ENCODE measurements at regions of chr5 and their contacts with region 1.

Region 1: DNA sequence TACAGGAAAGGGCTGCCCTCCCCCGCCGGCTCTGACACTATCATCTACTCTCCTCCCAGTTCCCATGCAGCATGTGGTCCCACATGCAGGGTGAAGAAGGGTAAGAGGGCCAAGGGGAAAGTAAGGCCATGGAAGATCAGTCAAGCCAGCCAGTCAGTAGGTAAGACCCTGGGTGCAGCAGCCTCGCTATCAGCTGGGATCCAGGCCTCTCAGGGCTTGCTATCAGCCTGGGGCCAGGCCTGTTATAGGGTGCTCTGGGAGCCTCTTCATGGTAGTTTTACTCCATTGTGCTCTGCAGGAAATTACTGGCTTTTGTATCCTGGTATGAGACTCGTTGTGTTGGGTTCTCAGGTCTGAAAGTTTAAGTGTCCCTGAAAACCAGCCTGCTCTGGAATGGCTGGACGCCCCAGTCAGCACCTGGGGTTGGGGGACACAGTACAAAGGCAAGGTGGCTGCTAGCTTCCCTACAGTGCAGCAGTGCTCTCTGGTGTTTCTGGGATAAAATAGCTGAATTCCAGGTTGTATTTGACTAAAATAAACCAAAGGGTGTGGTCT is 21.4 kb downstream of the SLC22A4 start:
- DNase-seq: peak; percentile 93 to 96 (median 95)
- ATAC-seq: peak; percentile 82
- H3K4me3 ChIP-seq: no peak overlapping the region
- H3K27ac ChIP-seq: peak overlapping the region; percentile 75
- H3K4me1 ChIP-seq: peaks cover 70 to 73% of the 10 kb centered on the region in 2 experiments
- H3K27me3 ChIP-seq: no peaks in the 10 kb centered on the region
- CTCF ChIP-seq: peak; percentile 54 to 79 (median 69)
- EP300 ChIP-seq: peak; percentile 93
- POLR2A ChIP-seq: no peak
- RAD21 ChIP-seq: peak; percentile 68 to 91

Region 2: GRCh38 chr5:132055808-132056609 is 259.6 kb before region 1 on chr5:
- CTCF ChIA-PET with region 1: no interaction called
- POLR2A ChIA-PET with region 1: no interaction called
- in situ Hi-C with region 1: no loop called
- intact Hi-C with region 1: no loop called
- DNase-seq: no peak
- ATAC-seq: peak; percentile 58
- H3K4me3 ChIP-seq: no peak overlapping the region
- H3K27ac ChIP-seq: no peak overlapping the region
- H3K4me1 ChIP-seq: peaks cover 0 to 17% of the 10 kb centered on the region in 2 experiments; a peak in 2 of 5 replicates
- H3K27me3 ChIP-seq: peaks cover 11 to 30% of the 10 kb centered on the region in 2 experiments; a peak in 4 of 5 replicates
- CTCF ChIP-seq: no peak
- EP300 ChIP-seq: no peak
- POLR2A ChIP-seq: no peak
- RAD21 ChIP-seq: no peak

Region 3: GRCh38 chr5:132238169-132238744 is 77.3 kb before region 1 on chr5:
- CTCF ChIA-PET with region 1: interaction called, 11 read pairs
- POLR2A ChIA-PET with region 1: no interaction called
- in situ Hi-C with region 1: no loop called
- intact Hi-C with region 1: loop called (anchors 1 kb)
- DNase-seq: peak; percentile 64 to 86 (median 77)
- ATAC-seq: peak; percentile 94
- H3K4me3 ChIP-seq: no peak overlapping the region
- H3K27ac ChIP-seq: no peak overlapping the region
- H3K4me1 ChIP-seq: no peaks in the 10 kb centered on the region; a peak in 2 of 5 replicates
- H3K27me3 ChIP-seq: no peaks in the 10 kb centered on the region
- CTCF ChIP-seq: peak; percentile 80 to 87 (median 81)
- EP300 ChIP-seq: no peak
- POLR2A ChIP-seq: no peak
- RAD21 ChIP-seq: peak; percentile 41 to 86

Region 4: DNA sequence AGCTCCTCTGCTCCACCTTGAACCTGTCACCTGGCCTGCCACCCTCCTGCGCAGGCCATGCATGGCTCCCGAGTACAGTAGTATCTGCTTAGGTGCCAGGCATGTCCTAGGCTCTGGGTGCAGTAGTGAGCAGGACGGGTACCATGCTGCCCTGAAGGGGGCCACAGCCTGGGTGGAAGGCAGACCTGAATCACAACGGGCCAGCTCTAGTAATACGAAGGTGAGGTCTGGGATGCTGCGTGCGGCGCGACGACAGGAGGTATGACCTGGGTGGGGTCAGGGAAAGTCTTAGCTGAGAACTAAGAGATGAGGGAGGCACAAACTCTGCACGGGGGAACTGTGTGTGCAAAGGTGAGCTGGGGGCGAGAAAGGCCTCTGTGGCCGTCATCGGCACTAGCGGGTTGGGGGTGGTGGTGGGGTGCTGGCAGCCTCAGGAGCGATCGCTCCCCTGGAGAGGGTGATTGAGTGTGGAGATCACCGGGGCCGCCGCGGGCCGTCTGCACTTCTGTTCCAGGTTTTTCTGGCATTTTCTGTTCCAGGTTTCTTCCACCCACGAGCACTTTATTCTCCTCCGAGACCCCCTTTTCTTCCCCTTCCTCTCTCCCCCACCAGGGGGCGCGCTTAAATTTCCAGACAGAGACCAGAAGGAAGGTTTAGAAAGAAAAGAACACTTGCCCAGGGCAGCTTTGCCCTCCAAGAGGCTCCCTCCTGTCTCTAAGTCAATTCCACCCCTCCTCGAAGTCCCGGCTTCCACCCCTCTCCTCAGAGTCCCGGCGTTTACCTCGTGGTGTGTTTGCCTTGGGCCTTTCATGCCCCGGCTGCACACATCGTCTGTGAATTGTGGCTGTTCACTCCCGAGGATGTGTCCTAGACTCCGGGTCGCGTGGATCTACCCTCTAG is 43.0 kb before region 1 on chr5:
- CTCF ChIA-PET with region 1: interaction called, 11 read pairs
- POLR2A ChIA-PET with region 1: no interaction called
- in situ Hi-C with region 1: no loop called
- intact Hi-C with region 1: loop called (anchors 1 kb)
- DNase-seq: peak; percentile 59 to 85 (median 65)
- ATAC-seq: peak; percentile 82
- H3K4me3 ChIP-seq: no peak overlapping the region
- H3K27ac ChIP-seq: no peak overlapping the region
- H3K4me1 ChIP-seq: peaks cover 12 to 41% of the 10 kb centered on the region in 2 experiments; a peak in 4 of 5 replicates
- H3K27me3 ChIP-seq: no peaks in the 10 kb centered on the region
- CTCF ChIP-seq: peak; percentile 82 to 89 (median 84)
- EP300 ChIP-seq: no peak
- POLR2A ChIP-seq: no peak
- RAD21 ChIP-seq: peak; percentile 62 to 89

Region 5: DNA sequence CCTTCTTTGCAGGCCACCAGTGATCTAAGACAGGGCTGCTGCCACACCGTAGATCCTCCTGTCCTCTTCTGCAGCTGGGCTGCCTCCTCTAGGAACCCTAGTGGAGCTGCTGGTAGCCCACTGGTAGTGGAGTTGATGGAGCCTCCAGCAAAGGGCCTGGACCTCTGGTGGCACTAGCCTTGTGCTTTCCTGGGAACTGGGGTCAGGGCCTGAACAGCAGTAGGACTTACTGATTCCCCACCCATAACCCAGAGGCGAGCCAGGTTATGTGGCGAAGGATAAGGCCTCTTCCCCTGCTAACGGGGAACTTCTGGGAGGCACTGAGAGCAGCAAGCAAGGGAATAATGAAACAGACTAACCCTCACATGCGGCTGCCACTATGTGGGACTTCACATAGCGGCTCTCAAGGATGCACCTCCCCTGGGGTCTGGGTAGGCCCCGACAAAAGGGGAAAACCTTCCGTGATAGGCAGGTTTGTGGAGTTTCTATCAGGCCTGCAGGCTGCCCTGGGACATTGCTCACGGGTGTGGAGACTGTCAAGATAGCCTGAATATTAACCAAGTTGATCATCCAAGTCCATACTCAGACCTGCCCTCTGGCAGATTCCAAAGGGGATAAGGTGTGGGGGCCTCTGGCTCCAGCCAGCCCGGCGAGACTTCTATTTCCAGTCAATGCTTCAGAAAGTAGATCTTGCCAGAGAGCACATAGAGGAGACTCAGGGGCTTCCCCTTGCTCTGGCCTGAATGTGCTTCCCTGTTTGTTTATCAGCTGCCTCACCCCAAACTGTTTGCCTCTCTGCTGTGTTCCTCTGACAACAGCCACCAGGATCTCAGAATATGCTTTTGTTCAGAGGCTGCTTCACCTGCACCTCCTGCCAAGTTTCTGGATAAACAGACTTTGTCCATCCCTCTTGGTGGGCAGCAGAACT is 14.0 kb before region 1 on chr5:
- CTCF ChIA-PET with region 1: interaction called, 3 read pairs
- POLR2A ChIA-PET with region 1: interaction called, 12 read pairs
- in situ Hi-C with region 1: no loop called
- intact Hi-C with region 1: loop called (anchors 1 kb)
- DNase-seq: no peak
- ATAC-seq: peak; percentile 59
- H3K4me3 ChIP-seq: no peak overlapping the region
- H3K27ac ChIP-seq: peak overlapping the region; percentile 42
- H3K4me1 ChIP-seq: peaks cover 43 to 56% of the 10 kb centered on the region in 2 experiments
- H3K27me3 ChIP-seq: no peaks in the 10 kb centered on the region
- CTCF ChIP-seq: 0 out of 6 replicates have a peak, but pooled peaks of 1 of the 3 experiments have one; percentile 7
- EP300 ChIP-seq: no peak
- POLR2A ChIP-seq: no peak
- RAD21 ChIP-seq: no peak

Region 6: DNA sequence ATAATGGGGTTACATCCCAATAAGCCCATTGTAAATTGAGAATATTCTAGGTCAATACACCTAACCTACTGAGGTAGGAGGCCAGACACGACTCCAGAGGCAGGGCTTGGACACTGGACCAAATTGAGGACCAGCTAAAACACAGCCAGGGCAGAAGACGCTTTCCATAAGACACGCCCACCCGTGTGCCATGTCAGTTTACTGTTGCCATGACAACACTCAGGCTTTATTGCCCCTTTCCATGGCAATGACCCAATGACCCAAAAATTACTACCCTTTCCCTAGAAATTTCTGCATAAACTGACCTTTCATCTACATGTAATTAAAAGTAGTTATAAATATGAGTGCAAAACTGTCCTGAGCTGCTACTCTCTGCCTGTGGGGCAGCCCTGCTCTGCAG is 10.1 kb after region 1 on chr5:
- CTCF ChIA-PET with region 1: no interaction called
- POLR2A ChIA-PET with region 1: interaction called, 11 read pairs
- in situ Hi-C with region 1: no loop called
- intact Hi-C with region 1: no loop called
- DNase-seq: no peak
- ATAC-seq: no peak
- H3K4me3 ChIP-seq: no peak overlapping the region
- H3K27ac ChIP-seq: no peak overlapping the region
- H3K4me1 ChIP-seq: peaks cover 5 to 7% of the 10 kb centered on the region in 2 experiments; a peak in 4 of 5 replicates
- H3K27me3 ChIP-seq: no peaks in the 10 kb centered on the region
- CTCF ChIP-seq: no peak
- EP300 ChIP-seq: no peak
- POLR2A ChIP-seq: no peak
- RAD21 ChIP-seq: no peak

Region 7: GRCh38 chr5:132355140-132355765 is 39.6 kb after region 1 on chr5:
- CTCF ChIA-PET with region 1: no interaction called
- POLR2A ChIA-PET with region 1: no interaction called
- in situ Hi-C with region 1: no loop called
- intact Hi-C with region 1: no loop called
- DNase-seq: no peak
- ATAC-seq: no peak
- H3K4me3 ChIP-seq: no peak overlapping the region
- H3K27ac ChIP-seq: no peak overlapping the region
- H3K4me1 ChIP-seq: peaks cover 0 to 5% of the 10 kb centered on the region in 2 experiments; a peak in 2 of 5 replicates
- H3K27me3 ChIP-seq: no peaks in the 10 kb centered on the region
- CTCF ChIP-seq: no peak
- EP300 ChIP-seq: no peak
- POLR2A ChIP-seq: no peak
- RAD21 ChIP-seq: no peak

Region 8: DNA sequence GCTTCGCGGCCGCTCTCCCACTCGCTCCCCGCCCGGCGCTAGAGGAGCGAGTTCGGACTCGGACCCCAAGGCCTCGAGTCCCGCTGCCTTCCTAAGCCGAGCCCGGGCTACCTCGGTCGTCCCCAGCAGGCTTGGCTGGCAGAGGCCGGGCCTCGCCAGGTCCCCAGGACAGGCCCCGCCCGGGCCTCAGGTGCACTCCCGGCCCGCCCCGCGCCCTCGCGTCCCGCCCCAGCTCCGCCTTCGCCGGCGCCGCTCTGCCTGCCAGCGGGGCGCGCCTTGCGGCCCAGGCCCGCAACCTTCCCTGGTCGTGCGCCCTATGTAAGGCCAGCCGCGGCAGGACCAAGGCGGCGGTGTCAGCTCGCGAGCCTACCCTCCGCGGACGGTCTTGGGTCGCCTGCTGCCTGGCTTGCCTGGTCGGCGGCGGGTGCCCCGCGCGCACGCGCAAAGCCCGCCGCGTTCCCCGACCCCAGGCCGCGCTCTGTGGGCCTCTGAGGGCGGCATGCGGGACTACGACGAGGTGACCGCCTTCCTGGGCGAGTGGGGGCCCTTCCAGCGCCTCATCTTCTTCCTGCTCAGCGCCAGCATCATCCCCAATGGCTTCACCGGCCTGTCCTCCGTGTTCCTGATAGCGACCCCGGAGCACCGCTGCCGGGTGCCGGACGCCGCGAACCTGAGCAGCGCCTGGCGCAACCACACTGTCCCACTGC is 54.0 kb after region 1 on chr5 and contains the start of gene SLC22A5:
- CTCF ChIA-PET with region 1: no interaction called
- POLR2A ChIA-PET with region 1: interaction called, 5 read pairs
- in situ Hi-C with region 1: no loop called
- intact Hi-C with region 1: loop called (anchors 5 kb)
- DNase-seq: peak; percentile 83 to 86 (median 84)
- ATAC-seq: peak; percentile 91
- H3K4me3 ChIP-seq: peak within 1 kb of the TSS; percentile 66
- H3K27ac ChIP-seq: peak within 1 kb of the TSS; percentile 78
- H3K4me1 ChIP-seq: peaks cover 16 to 26% of the 10 kb centered on the region in 2 experiments; a peak in 4 of 5 replicates
- H3K27me3 ChIP-seq: no peaks in the 10 kb centered on the region
- CTCF ChIP-seq: no peak
- EP300 ChIP-seq: no peak
- POLR2A ChIP-seq: peak; percentile 73
- RAD21 ChIP-seq: no peak
- polyA plus RNA-seq, gene SLC22A5: 3.0 to 3.3 TPM

Region 9: DNA sequence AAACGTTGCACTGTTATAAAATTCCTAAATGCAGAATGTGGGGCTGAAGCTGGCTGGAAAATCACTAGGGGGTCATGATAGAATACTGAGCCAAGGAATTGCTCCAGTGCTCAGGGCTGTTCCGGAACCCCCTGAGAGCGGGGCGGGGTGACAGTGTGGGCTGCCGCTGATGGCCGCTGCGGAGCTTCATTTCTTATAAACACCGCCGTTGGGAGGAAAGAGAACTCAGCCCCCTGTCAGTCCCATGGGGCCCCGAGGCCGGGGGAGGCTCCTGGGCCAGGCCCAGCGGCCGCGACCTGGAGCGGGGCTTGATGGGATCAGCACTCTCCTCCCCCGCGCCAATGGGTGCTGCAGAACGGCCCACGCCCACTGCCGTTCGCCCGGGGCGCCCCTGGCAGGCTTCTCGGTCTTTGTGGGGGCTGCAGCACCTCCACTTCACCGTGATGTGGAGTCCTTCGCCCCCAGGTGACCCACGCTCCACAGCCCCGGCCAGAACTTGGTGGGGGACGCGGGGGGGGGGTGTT is 180.1 kb after region 1 on chr5:
- CTCF ChIA-PET with region 1: no interaction called
- POLR2A ChIA-PET with region 1: no interaction called
- in situ Hi-C with region 1: no loop called
- intact Hi-C with region 1: loop called (anchors 1 kb)
- DNase-seq: peak; percentile 90 to 95 (median 94)
- ATAC-seq: peak; percentile 84
- H3K4me3 ChIP-seq: peak overlapping the region; percentile 72
- H3K27ac ChIP-seq: peak overlapping the region; percentile 87
- H3K4me1 ChIP-seq: peaks cover 47 to 61% of the 10 kb centered on the region in 2 experiments
- H3K27me3 ChIP-seq: no peaks in the 10 kb centered on the region
- CTCF ChIP-seq: peak; percentile 33 to 40 (median 39); a peak in 5 of 6 replicates
- EP300 ChIP-seq: peak; percentile 60
- POLR2A ChIP-seq: peak; percentile 61
- RAD21 ChIP-seq: peak; percentile 43 to 48